H1 (cell line): ENCODE measurements at regions of chr4 and their contacts with region 1.

Region 1: DNA sequence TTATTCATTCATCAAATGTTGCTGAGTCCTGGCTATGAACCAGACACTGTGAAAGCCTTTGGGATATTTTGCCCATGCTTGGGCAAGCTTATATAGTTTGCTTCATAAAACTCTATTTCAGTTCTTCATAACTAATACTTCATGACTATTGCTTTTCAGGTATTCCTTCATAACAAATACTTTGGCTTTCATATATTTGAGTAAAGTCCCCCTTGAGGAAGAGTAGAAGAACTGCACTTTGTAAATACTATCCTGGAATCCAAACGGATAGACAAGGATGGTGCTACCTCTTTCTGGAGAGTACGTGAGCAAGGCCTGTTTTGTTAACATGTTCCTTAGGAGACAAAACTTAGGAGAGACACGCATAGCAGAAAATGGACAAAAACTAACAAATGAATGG is 1.7 kb upstream of the AFP start:
- DNase-seq: no peak
- H3K4me3 ChIP-seq: no peak overlapping the region
- H3K27ac ChIP-seq: no peak overlapping the region
- H3K4me1 ChIP-seq: no peaks in the 10 kb centered on the region
- H3K27me3 ChIP-seq: no peaks in the 10 kb centered on the region
- CTCF ChIP-seq: peak in 1 of 3 experiments; percentile 40; a peak in 2 of 4 replicates
- EP300 ChIP-seq: no peak
- POLR2A ChIP-seq: no peak
- RAD21 ChIP-seq: peak; percentile 23 to 25; a peak in 3 of 4 replicates

Region 2: DNA sequence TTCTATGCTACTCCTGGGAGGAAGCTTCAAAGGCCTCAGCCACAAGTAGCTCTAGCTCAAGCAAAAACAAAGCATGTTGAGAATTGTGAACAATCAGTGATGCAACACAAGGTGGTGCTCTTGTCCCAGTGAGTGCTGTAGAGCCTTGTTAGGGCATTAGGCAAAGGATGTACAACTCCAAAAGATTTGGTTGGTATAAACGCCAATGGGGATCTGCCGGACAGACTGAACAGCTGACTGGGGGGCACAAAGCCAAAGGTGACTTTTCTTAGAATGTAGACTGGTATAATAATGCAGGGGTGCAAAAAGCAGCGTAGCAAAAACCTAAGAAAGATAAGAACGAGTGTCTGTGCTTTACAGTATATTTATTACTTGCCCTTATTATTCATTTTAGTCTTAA is 92.9 kb before region 1 on chr4:
- CTCF ChIA-PET with region 1: interaction called, 23 read pairs
- POLR2A ChIA-PET with region 1: no interaction called
- DNase-seq: peak in 1 of 2 experiments; percentile 53
- H3K4me3 ChIP-seq: no peak overlapping the region
- H3K27ac ChIP-seq: no peak overlapping the region
- H3K4me1 ChIP-seq: peaks cover 0 to 5% (median 1%) of the 10 kb centered on the region in 4 experiments; a peak in 4 of 7 replicates
- H3K27me3 ChIP-seq: no peaks in the 10 kb centered on the region
- CTCF ChIP-seq: peak in 2 of 3 experiments; percentile 90 to 95; a peak in 3 of 4 replicates
- EP300 ChIP-seq: no peak
- POLR2A ChIP-seq: no peak
- RAD21 ChIP-seq: peak; percentile 98 to 100

Region 3: DNA sequence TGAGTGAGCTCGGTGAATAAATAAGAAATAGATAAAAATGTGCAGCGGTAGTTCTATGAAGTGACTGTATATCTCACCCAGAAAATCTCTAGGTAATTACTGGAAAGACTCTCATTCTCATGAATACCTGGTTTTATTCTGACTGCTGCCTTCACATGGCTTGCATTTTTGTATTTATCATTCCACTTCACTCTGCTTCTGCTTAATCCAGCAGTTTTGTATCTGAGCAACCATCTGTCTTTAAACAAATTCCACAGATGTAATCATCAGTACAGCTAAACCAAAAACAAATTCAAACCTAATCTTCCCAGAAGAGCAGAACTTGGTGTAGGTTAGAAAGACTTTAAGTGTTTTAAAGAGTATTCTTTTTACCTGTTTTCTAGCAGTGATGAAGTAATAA is 41.4 kb before region 1 on chr4:
- CTCF ChIA-PET with region 1: no interaction called
- POLR2A ChIA-PET with region 1: no interaction called
- DNase-seq: no peak
- H3K4me3 ChIP-seq: no peak overlapping the region
- H3K27ac ChIP-seq: no peak overlapping the region
- H3K4me1 ChIP-seq: no peaks in the 10 kb centered on the region
- H3K27me3 ChIP-seq: no peaks in the 10 kb centered on the region
- CTCF ChIP-seq: no peak
- EP300 ChIP-seq: no peak
- POLR2A ChIP-seq: no peak
- RAD21 ChIP-seq: no peak

Region 4: DNA sequence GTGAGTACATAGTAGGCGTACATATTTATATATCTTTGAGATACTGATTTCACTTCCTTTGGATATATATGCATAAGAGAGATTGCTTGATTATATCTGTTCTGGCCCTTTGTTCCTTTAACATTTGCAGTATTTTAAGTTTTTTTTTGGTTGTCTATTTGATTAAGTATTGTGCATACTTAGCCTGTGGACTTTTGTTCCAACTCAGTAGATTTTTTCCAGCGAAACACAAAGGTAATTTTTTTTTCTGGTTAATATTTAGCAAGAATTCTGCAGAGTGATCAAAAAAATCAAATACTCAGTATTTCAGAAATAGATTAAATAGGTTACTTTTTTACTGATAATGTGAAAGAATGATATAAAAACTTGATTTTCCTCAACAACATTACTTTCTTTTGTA is 47.0 kb after region 1 on chr4 and contains the start of gene AFM:
- CTCF ChIA-PET with region 1: no interaction called
- POLR2A ChIA-PET with region 1: no interaction called
- DNase-seq: no peak
- H3K4me3 ChIP-seq: no peak within 1 kb of the TSS
- H3K27ac ChIP-seq: no peak within 1 kb of the TSS
- H3K4me1 ChIP-seq: 0 out of 7 replicates have a peak, but pooled peaks cover 0 to 2% (median 0%) of the 10 kb centered on the region in 4 experiments
- H3K27me3 ChIP-seq: no peaks in the 10 kb centered on the region
- CTCF ChIP-seq: no peak
- EP300 ChIP-seq: no peak
- POLR2A ChIP-seq: no peak
- RAD21 ChIP-seq: no peak
- total RNA-seq, gene AFM: not detected in 2 replicates